ENCODE measurements at regions of chr17 and their contacts with region 1.

Region 1: DNA sequence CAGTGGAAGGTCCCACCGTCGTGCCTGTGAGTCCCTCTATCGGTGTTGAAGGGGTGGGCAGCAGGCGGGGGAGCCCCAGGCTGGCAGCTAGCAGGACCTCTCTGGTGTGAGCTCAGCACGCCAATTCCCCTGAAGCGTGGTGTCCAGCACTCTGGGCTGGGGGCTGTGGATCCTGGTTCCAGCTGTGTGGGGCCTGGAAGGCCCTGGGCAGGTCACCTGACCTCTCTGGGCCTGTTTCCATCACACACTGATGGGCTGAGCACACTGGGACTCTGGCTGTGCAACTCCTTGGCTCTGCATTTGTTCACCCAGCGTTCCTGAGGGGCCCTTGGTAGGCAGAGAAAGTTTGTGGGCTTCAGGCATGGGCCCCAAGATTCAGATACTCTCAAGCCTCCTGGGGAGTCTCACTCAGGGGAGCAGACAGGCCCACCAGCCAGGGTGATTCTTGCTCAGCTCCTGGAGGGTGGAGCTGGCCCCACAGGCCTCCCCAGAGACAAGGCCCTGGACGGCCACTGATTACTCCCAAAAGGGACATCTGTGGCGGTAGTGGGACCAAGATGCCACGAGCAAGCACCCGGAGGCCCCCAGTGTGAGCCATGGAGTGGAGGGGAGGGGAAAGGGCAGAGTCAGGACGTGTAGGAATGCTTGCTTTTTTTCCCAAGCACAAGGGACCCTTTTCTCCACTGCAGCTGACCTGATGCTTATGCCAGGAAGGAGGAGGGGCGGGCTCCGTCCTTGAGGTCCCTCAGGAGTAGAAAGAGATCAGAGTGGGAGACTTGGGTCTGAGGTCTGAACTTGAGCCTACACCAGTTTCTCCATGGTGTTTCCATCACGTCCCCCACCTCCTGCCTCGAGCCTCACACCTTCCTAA is 8.5 kb downstream of the SCGB1C2 start:
- DNase-seq: peak in 1 of 2 donors; percentile 15
- H3K4me3 ChIP-seq: no peak overlapping the region
- H3K27ac ChIP-seq: no peak overlapping the region
- H3K4me1 ChIP-seq: peaks cover 0 to 12% (median 7%) of the 10 kb centered on the region in 4 donors
- H3K27me3 ChIP-seq: no peaks in the 10 kb centered on the region
- CTCF ChIP-seq: no peak
- EP300 ChIP-seq: no peak
- POLR2A ChIP-seq: no peak

Region 2: DNA sequence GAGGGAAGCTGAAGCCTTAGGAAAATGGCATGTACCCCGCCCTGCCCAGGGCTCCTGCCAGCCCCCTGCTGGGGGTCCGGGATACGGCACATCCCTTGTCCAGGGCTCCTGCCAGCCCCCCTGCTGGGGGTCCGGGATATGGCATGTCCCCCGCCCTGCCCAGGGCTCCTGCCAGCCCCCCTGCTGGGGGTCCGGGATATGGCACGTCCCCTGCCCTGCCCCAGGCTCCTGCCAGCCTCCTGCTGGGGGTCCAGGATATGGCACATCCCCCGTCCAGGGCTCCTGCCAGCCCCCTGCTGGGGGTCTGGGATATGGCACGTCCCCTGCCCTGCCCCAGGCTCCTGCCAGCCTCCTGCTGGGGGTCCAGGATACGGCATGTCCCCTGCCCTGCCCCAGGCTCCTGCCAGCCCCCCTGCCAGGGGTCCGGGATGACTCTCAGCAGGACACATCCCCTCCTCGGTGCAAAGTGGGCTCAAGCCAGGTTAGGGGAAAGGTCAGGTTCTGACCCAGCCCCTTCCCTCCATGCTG is 163.5 kb after region 1 on chr17:
- intact Hi-C with region 1: no loop called
- DNase-seq: peak in 1 of 2 donors; percentile 57
- H3K4me3 ChIP-seq: no peak overlapping the region
- H3K27ac ChIP-seq: no peak overlapping the region
- H3K4me1 ChIP-seq: peaks cover 0 to 4% (median 0%) of the 10 kb centered on the region in 4 donors
- H3K27me3 ChIP-seq: no peaks in the 10 kb centered on the region
- CTCF ChIP-seq: peak in 3 of 7 experiments; percentile 22 to 33 (median 25)
- EP300 ChIP-seq: no peak
- POLR2A ChIP-seq: no peak

Region 3: DNA sequence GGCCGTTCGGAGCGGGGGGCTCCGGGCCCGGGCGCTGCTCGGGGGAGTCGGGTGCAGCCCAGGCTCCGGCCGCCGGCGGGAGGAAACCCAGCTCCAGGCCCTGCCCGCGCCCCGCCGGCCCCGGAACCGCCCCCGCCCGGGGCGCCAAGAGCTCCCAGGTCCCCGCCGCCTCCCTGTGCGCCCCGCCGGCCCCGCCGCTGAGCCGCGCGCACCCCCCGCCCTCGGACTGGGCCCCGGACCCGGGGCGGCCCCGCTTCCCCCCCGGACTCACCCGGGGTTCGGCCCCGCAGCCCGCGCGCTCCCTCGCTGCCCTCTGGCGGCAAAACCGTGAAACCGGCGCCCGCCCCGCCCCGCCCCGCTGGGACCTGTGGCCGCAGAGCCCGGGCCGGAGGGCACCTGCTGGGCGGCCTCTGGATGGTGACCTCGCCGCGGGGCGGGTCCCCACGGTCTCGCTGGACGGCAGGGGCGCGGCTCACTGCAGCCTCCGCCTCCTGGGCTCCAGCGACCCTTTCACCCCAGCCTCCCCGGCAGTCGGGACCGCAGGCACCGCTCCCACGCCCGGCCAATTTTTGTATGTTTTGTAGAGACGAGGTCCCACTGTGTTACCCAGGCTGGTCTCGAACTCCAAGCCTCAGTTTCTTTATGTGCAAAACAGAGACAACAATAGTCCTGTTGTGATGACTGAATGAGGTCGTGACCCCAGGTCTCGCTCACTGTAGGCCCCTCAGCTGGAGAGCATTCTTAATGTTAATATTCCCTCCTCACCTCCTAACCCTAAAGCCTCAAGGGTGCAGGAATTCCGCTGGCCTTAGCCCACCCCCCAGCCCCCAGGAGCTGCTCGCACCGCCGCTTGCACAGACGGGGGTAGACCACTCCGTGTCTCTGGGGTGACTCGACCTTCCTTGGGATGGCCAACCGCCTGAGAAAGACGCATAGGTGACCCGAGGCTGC is 240.3 kb after region 1 on chr17:
- intact Hi-C with region 1: loop called (anchors 5 kb)
- DNase-seq: peak; percentile 87 to 90
- H3K4me3 ChIP-seq: peak overlapping the region; percentile 56 to 71 (median 70)
- H3K27ac ChIP-seq: peak overlapping the region; percentile 35 to 88 (median 75)
- H3K4me1 ChIP-seq: peaks cover 15 to 29% (median 21%) of the 10 kb centered on the region in 4 donors
- H3K27me3 ChIP-seq: peaks cover 0 to 34% (median 0%) of the 10 kb centered on the region in 3 donors
- CTCF ChIP-seq: peak in 4 of 7 experiments; percentile 25 to 87 (median 72)
- EP300 ChIP-seq: no peak
- POLR2A ChIP-seq: no peak